PC-3 (cell line): ENCODE measurements at regions of chr5 and their contacts with region 1.

Region 1: DNA sequence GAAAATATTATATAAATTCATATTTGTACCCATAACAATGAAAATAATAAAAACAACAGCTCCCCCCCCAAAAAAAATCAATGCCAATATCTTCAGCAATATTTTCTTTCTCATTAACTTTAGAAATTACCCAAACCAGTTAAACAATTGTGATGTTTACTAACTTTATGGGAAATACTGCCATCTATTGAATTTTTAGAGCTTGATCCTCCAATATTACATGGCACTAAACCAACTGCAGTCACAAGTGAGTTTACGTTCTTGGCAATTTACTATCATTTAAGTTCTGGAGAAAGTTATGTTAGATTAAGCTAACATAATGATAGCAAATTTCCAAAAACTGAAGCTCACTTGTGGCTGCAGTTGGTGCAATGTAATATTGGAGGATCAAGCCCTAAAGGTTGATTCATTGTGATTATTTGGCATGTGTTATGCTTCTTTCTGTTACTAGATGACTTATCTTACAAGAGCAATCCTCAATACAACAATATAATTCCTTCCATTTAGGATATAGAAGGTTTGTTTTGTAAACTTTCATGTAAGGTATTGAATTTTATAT is 379.5 kb downstream of the CDH18 start:
- DNase-seq: peak; percentile 58
- ATAC-seq: no peak
- H3K4me3 ChIP-seq: no peak overlapping the region
- H3K27ac ChIP-seq: no peak overlapping the region
- H3K4me1 ChIP-seq: 0 out of 2 replicates have a peak, but pooled peaks cover 3% of the 10 kb centered on the region
- H3K27me3 ChIP-seq: no peaks in the 10 kb centered on the region
- CTCF ChIP-seq: peak; percentile 77

Region 2: GRCh38 chr5:18465833-18466591 is 1142.5 kb before region 1 on chr5:
- CTCF ChIA-PET with region 1: no interaction called
- POLR2A ChIA-PET with region 1: no interaction called
- intact Hi-C with region 1: loop called (anchors 2 kb)
- DNase-seq: peak; percentile 82
- ATAC-seq: peak; percentile 87
- H3K4me3 ChIP-seq: peak overlapping the region; percentile 60
- H3K27ac ChIP-seq: no peak overlapping the region
- H3K4me1 ChIP-seq: 0 out of 2 replicates have a peak, but pooled peaks cover 6% of the 10 kb centered on the region
- H3K27me3 ChIP-seq: no peaks in the 10 kb centered on the region
- CTCF ChIP-seq: peak; percentile 84

Region 3: DNA sequence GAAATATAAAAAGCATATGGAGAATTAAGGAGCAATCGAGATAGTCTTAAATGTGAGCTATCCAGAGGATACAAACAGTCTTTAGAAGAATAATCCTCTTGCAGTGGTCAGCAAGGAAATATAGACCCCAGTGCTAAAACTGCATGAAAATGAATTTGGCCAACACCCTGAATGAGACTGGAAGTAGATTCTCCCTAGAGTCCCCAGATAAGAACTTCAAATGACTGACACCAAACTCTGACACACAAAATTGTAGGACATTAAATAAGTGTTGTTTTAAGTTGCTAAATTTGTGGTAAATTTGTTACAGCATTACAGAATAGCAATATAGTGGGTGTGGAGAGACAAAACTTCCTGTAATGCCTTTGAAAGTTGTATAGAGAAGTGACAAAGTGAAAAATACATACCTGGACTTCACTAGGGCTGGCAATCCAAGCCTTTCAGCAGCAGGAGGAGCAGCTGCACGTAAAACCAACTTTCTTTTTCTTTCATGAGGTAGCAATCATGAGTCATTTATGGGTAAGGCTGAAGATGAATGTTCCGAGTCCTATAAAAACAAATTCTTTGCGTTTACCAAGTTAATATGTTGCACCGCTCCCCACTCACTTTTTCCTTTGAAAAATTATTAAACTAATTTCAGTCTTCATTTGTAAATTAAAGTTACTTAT is 836.2 kb before region 1 on chr5:
- CTCF ChIA-PET with region 1: interaction called, 6 read pairs
- POLR2A ChIA-PET with region 1: no interaction called
- intact Hi-C with region 1: loop called (anchors 1 kb)
- DNase-seq: peak; percentile 88
- ATAC-seq: peak; percentile 94
- H3K4me3 ChIP-seq: peak overlapping the region; percentile 29; the same call in 1 of the 2 replicates
- H3K27ac ChIP-seq: no peak overlapping the region
- H3K4me1 ChIP-seq: no peaks in the 10 kb centered on the region
- H3K27me3 ChIP-seq: no peaks in the 10 kb centered on the region
- CTCF ChIP-seq: peak; percentile 91

Region 4: DNA sequence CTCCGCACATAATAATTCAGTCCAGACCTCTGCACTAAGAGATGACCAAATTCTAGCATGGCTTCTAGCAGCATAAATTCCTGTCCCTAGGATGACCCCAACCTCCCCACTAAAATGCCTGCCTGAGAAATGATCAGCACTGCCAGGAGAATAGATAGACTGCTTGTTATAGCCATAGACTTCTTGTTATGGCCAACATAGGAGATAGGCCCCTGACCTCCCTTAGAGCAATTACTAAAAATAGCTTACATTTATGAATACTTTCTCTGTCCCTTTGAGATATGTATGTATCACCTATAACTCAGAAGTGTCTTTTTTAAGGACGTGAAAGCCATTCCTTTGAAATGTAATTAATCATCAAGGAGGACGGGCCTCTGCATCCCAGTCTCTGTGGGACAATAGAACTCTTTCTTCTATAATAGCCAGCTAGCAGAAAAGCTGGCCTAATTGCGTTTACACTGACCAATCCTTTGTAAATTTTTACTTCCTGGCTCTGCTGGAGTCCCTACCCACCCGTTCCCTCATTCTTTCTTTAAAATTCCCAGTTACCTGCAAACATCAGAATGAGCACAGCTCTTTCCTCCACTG is 623.3 kb before region 1 on chr5:
- CTCF ChIA-PET with region 1: no interaction called
- POLR2A ChIA-PET with region 1: no interaction called
- intact Hi-C with region 1: loop called (anchors 10 kb)
- DNase-seq: peak; percentile 67
- ATAC-seq: peak; percentile 74
- H3K4me3 ChIP-seq: no peak overlapping the region
- H3K27ac ChIP-seq: peak overlapping the region; percentile 87
- H3K4me1 ChIP-seq: peaks cover 18% of the 10 kb centered on the region
- H3K27me3 ChIP-seq: no peaks in the 10 kb centered on the region
- CTCF ChIP-seq: no peak

Region 5: GRCh38 chr5:19258686-19259085 is 349.8 kb before region 1 on chr5:
- CTCF ChIA-PET with region 1: no interaction called
- POLR2A ChIA-PET with region 1: no interaction called
- intact Hi-C with region 1: loop called (anchors 5 kb)
- DNase-seq: no peak
- ATAC-seq: no peak
- H3K4me3 ChIP-seq: no peak overlapping the region
- H3K27ac ChIP-seq: no peak overlapping the region
- H3K4me1 ChIP-seq: no peaks in the 10 kb centered on the region
- H3K27me3 ChIP-seq: no peaks in the 10 kb centered on the region
- CTCF ChIP-seq: no peak

Region 6: DNA sequence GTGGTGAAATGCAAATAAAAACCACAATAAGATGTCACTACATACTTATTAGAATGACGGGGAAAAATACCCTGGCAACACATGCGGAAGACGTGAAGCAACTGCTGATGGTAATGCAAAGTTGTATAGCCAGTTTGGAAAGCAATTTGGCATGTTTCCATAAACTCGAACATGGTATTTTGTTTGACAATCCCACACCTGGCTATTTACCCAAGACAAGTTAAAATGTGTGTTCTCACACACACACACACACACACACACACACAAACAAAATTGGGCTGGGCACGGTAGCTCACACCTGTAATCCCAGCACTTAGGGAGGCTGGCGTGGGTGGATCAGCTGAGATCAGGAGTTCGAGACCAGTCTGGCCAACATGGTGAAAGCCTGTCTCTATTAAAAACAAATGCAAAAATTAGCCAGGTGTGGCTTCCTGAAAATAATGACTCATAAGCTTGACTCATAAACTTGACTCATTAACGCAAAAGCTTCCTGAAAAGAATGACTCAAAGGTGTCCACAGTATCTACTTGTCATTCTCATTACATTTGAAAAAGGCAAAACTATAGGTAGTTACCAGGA is 77.1 kb before region 1 on chr5:
- CTCF ChIA-PET with region 1: no interaction called
- POLR2A ChIA-PET with region 1: no interaction called
- intact Hi-C with region 1: loop called (anchors 5 kb)
- DNase-seq: peak; percentile 92
- ATAC-seq: peak; percentile 92
- H3K4me3 ChIP-seq: 0 out of 2 replicates have a peak overlapping the region, but pooled peaks have one; percentile 4
- H3K27ac ChIP-seq: peak overlapping the region; percentile 80
- H3K4me1 ChIP-seq: peaks cover 12% of the 10 kb centered on the region
- H3K27me3 ChIP-seq: no peaks in the 10 kb centered on the region
- CTCF ChIP-seq: no peak